ENCODE measurements at regions of chr19 and their contacts with region 1.

Region 1: DNA sequence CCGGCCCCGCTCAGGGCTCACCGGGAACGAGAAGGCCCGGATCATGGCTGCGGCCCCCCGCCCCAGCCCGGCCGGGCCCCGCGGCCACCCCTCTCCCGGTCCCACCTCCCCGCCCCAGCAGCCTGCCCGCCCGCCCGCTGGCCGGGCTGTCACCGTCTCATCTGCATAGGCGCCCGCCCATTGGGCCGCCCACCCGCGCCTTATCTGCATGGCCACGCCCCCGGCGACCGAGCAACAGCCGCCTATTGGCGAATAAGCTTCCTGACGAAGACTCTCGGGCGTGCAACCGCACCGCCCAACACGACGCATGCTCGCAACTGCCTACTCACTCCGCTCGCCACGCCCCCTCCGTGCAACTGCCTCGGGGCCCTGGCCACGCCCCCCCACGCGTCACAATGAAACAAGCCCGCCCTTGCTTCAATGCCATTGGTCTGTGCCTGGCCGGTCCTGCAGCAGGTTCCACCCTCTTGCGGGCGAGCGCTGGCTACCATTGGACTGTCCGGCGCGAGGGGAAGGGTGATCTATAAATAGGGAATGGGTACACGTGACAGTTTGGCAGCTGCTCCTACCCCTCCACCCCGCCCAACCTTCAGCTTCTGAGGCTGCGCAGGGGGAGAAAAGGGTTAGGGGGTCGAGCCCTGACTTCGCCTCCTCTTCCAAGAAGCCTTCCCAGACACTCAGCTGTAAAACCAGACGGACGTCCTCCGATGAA is at the start of gene DACT3:
- DNase-seq: peak; percentile 100
- total RNA-seq, gene DACT3: 23.8 TPM

Region 2: DNA sequence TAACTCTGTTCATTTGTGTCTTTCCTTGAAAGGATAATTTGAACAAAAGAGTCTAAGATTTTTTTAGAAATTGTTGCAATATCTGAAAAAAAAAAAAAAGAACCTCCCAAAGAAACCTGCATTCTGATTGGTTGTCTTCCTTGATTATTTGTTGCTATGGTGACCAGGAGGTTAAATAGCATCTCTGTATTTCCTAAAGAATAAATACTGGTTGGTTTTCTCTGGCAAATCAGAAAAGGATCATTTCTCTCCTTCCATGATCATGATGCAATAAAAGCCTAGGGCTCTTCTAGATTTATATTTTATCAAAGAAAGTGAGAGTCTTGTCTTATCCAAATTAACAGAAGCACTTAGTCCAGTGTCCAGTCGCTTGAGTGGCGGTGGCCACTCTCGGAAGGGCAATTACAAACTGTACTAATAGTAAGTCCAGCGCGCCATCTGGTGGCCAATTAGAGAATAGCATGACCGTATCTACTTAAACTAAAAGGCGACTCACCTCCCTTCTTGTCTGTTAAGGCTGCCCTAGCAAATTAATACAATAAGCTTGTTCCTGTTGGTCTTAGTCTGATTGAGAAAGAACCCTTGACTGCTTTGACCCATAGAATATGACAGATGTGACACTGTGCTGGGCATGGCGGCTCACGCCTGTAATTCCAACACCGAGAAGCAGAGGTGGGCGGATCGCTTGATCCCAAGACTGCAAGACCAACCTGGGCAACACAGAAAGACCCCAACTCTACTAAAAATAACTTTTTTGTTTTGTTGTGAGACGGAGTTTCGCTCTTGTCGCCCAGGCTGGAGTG is 118.5 kb before region 1 on chr19:
- intact Hi-C with region 1: loop called (anchors 10 kb)
- DNase-seq: peak; percentile 89

Region 3: DNA sequence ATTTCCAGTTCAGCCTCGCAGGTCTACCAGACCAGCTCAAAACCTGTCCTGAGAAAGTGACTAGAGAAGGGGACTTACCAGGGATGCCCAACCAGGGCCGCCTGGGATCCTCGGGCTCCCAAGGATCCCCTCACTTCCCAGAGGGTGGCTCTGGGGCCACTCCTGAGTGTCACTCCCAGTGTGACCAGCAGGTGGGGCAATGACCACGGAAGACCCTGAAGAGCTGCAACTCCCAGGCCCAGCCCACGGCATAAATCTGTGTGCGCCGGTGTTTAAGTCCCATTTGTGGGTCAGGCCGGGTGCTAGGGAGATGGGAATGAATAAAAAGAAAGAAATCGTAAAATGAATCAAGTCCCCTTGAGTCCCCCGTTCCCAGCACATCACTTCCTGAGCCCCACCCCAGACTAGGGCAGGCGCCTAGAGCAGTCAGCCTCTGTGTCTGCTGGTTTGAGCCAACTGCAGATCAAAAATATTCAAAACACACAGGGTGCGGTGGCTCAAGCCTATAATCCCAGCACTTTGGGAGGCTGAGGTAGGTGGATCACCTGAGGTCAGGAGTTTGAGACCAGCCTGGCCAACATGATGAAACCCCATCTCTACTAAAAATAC is 47.0 kb before region 1 on chr19:
- intact Hi-C with region 1: loop called (anchors 1 kb)
- DNase-seq: peak; percentile 89

Region 4: GRCh38 chr19:46692918-46693722 is 31.9 kb after region 1 on chr19:
- intact Hi-C with region 1: no loop called
- DNase-seq: no peak

Region 5: GRCh38 chr19:46766569-46767317 is 105.6 kb after region 1 on chr19:
- intact Hi-C with region 1: no loop called
- DNase-seq: no peak